Panc1 (cell line): ENCODE measurements at regions of chr10 and their contacts with region 1.

Region 1: DNA sequence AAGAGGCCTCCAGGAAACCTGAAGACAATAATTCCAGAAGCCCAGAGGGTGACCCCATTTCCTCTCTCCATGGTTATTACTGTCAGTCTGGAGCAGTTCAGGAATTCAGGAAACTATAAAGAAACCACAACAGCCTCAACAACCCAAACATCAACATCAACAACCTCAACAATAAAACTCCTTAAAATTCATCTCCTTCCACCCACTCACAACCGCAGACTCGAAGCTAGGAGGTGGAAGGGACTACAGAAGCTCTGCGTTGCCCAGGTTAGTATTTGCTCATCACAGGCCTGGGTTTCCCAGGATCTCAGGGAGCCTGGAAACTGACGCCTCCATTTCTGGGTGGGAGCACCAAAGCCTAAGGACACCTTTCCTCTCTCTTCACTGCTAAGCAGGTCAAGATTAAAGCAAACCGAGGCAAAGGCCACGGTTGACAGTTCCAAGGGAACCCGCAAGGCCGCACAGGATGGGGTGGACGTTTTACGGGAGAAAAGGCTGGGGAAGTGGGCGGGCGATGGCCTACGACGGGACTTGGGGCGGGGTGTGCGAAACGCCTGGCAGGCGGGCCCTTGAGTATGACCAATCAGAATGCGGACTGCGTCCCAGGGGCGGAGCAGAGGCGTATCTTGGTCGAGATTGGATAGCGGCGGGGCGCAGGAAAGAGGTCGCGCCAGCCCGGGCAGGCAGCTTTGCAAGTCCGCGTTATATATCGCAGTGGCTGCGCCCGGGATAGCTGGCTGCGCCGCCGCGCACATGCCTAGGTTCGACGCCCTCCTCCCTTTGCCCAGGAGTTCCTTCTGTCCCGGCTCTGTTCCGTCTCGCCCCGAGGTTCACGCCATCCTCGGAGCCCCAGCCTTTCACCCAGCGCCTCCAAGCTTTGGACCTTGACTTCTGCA is at the start of gene ELOVL3:
- DNase-seq: peak; percentile 50
- ATAC-seq: peak; percentile 87
- H3K4me3 ChIP-seq: peak within 1 kb of the TSS; percentile 26 to 61
- H3K27ac ChIP-seq: peak within 1 kb of the TSS; percentile 64
- H3K4me1 ChIP-seq: 0 out of 2 replicates have a peak, but pooled peaks cover 5% of the 10 kb centered on the region
- H3K27me3 ChIP-seq: peaks cover 9% of the 10 kb centered on the region
- CTCF ChIP-seq: no peak
- total RNA-seq, gene ELOVL3: 1.2 TPM

Region 2: GRCh38 chr10:102167861-102168260 is 58.0 kb before region 1 on chr10:
- CTCF ChIA-PET with region 1: interaction called, 22 read pairs
- POLR2A ChIA-PET with region 1: no interaction called
- in situ Hi-C with region 1: no loop called
- intact Hi-C with region 1: loop called (anchors 10 kb)
- DNase-seq: no peak
- ATAC-seq: no peak
- H3K4me3 ChIP-seq: no peak overlapping the region
- H3K27ac ChIP-seq: no peak overlapping the region
- H3K4me1 ChIP-seq: peaks cover 3% of the 10 kb centered on the region; the same call in 1 of the 2 replicates
- H3K27me3 ChIP-seq: no peaks in the 10 kb centered on the region
- CTCF ChIP-seq: no peak

Region 3: GRCh38 chr10:102310361-102311024 is 84.6 kb after region 1 on chr10:
- CTCF ChIA-PET with region 1: no interaction called
- POLR2A ChIA-PET with region 1: no interaction called
- in situ Hi-C with region 1: no loop called
- intact Hi-C with region 1: no loop called
- DNase-seq: no peak
- ATAC-seq: peak; percentile 78
- H3K4me3 ChIP-seq: no peak overlapping the region
- H3K27ac ChIP-seq: 0 out of 2 replicates have a peak overlapping the region, but pooled peaks have one; percentile 8
- H3K4me1 ChIP-seq: peaks cover 29% of the 10 kb centered on the region
- H3K27me3 ChIP-seq: no peaks in the 10 kb centered on the region
- CTCF ChIP-seq: no peak

Region 4: DNA sequence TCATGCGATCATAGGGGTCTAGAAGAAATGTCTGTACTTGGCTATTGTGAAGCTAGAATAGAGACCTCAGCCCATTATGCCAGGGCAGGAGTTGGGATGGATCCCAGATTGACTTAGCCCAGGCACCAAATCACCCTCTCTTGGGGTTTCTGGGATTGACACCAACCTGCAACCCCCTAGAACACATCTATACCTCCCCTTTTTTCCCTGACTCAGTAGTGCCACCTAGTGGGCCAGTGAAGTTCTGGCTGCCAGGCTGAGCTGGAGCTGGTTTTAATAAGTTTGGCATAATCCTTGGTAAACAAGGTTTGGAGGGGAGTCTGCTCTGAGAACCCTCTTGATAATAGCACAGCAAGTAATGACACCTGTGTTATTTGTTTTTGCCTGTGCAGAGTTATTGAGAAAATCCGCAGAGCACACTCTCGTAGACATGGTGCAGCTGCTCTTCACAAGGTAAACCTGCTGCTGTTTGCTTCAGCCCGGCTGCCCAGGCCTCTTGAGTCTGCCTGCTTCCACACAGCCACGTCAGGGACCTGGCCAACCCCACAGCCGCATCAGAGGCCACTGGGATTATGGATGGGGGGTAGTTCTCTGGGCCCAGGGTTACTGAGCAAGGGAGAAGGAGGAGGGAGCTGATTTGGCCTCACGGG is 126.3 kb after region 1 on chr10:
- CTCF ChIA-PET with region 1: interaction called, 86 read pairs
- POLR2A ChIA-PET with region 1: interaction called, 4 read pairs
- in situ Hi-C with region 1: loop called (anchors 5 kb)
- intact Hi-C with region 1: loop called (anchors 1 kb)
- DNase-seq: peak; percentile 42
- ATAC-seq: peak; percentile 85
- H3K4me3 ChIP-seq: no peak overlapping the region
- H3K27ac ChIP-seq: no peak overlapping the region
- H3K4me1 ChIP-seq: no peaks in the 10 kb centered on the region
- H3K27me3 ChIP-seq: no peaks in the 10 kb centered on the region
- CTCF ChIP-seq: peak; percentile 99

Region 5: DNA sequence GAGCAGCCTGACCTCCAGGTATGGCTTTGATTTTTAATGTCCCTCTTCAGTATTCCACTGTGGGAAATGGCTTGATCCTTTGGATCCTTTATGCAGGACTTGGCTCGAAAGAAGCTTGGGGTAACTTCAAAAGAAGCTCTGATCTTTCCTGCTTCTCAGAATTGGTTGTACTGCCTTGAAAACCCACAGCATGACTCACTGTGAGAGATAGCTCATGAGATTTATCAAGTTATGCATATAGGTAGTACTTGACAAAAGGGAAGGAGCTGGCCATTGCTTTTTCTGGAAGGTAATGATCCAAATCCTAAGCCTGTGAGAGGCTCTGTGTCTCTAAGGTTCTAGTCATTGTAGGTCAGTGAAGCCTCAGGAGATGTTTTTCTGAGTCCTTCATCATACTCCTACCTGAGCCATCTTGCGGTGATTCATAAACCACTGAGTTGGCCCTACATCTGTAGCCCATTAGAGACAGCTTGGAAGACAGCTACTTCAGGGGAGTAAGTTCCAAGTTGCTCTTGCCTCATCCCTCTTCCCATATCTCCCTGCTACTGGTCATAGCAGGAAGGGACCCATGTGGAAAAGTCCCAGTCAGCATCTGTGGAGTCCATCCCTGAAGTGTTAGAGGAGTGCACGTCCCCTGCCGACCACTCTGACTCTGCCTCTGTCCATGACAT is 133.0 kb after region 1 on chr10:
- CTCF ChIA-PET with region 1: interaction called, 10 read pairs
- POLR2A ChIA-PET with region 1: no interaction called
- in situ Hi-C with region 1: loop called (anchors 5 kb)
- intact Hi-C with region 1: no loop called
- DNase-seq: no peak
- ATAC-seq: no peak
- H3K4me3 ChIP-seq: no peak overlapping the region
- H3K27ac ChIP-seq: no peak overlapping the region
- H3K4me1 ChIP-seq: no peaks in the 10 kb centered on the region
- H3K27me3 ChIP-seq: no peaks in the 10 kb centered on the region
- CTCF ChIP-seq: no peak

Region 6: DNA sequence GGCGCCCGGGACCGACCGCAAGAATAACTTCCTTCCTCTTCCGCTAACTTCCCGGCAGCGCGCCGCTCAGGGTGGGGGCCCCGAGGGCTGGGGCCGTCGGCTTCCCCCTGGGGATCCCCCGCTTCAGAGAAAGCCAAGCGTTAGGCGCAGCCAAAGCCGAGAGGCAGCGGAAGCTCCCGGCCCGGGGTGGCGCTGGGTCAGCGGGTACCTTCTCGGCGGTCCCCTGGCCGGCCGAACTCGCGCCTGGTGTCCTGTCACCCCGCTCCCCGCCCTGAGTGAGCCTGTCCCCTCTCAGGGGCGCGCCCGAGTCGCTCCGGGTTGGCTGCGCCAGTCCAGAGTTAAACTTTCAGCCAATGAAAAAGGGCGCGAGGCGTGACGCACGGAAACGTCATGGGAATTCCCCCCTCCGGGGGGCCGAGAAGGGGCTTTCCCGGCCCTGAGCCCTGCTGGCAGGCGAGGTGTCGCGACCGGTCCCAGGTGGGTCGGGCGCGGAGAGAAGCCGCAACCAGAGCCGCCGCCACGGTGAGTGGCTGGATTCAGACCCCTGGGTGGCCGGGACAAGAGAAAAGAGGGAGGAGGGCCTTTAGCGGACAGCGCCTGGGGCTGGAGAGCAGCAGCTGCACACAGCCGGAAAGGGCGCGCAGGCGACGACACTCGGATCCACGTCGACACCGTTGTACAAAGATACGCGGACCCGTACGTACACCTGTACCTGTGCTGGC is 168.3 kb after region 1 on chr10:
- CTCF ChIA-PET with region 1: interaction called, 19 read pairs
- POLR2A ChIA-PET with region 1: no interaction called
- in situ Hi-C with region 1: no loop called
- intact Hi-C with region 1: loop called (anchors 5 kb)
- DNase-seq: peak; percentile 79
- ATAC-seq: peak; percentile 92
- H3K4me3 ChIP-seq: peak overlapping the region; percentile 67 to 89
- H3K27ac ChIP-seq: peak overlapping the region; percentile 63
- H3K4me1 ChIP-seq: peaks cover 23% of the 10 kb centered on the region
- H3K27me3 ChIP-seq: no peaks in the 10 kb centered on the region; the same call in 1 of the 2 replicates
- CTCF ChIP-seq: peak; percentile 86

Region 7: GRCh38 chr10:102399217-102400089 is 173.6 kb after region 1 on chr10:
- CTCF ChIA-PET with region 1: interaction called, 19 read pairs
- POLR2A ChIA-PET with region 1: no interaction called
- in situ Hi-C with region 1: no loop called
- intact Hi-C with region 1: loop called (anchors 5 kb)
- DNase-seq: no peak
- ATAC-seq: peak; percentile 65
- H3K4me3 ChIP-seq: peak overlapping the region; percentile 41 to 42
- H3K27ac ChIP-seq: peak overlapping the region; percentile 72
- H3K4me1 ChIP-seq: peaks cover 45% of the 10 kb centered on the region
- H3K27me3 ChIP-seq: no peaks in the 10 kb centered on the region
- CTCF ChIP-seq: peak; percentile 100